ENCODE measurements at regions of chr6 and their contacts with region 1.

Region 1: DNA sequence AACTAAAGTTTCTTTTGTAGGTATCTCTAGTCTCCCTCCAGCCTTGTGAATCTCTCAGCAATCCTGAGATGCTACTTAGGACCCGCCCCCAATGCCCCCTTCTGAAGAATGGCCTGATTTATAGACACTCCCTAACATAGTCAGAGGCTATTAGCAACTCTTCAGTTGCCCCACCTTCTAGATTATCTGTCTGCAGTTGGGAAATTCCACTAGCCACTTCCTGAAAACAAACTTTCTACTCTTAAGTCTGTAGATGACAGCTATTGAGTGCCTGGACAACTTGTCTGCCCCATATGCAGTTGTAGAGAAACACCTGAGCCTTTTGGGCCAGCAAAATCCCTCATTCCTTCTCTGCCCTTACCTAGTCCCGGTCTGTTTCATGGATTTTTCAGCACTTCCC is 188.2 kb upstream of the PREP start:
- DNase-seq: peak; percentile 6 to 36 (median 8)
- H3K4me3 ChIP-seq: no peak overlapping the region
- H3K4me3 Mint-ChIP-seq: peak overlapping the region in 5 of 8 donors; percentile 9 to 67 (median 52)
- H3K27ac ChIP-seq: no peak overlapping the region
- H3K27ac Mint-ChIP-seq: peak overlapping the region in 4 of 7 donors; percentile 19 to 61 (median 56)
- H3K4me1 ChIP-seq: peaks cover 29% of the 10 kb centered on the region
- H3K4me1 Mint-ChIP-seq: peaks cover 27 to 50% (median 36%) of the 10 kb centered on the region in 4 donors
- H3K27me3 ChIP-seq: no peaks in the 10 kb centered on the region
- H3K27me3 Mint-ChIP-seq: no peaks in the 10 kb centered on the region

Region 2: DNA sequence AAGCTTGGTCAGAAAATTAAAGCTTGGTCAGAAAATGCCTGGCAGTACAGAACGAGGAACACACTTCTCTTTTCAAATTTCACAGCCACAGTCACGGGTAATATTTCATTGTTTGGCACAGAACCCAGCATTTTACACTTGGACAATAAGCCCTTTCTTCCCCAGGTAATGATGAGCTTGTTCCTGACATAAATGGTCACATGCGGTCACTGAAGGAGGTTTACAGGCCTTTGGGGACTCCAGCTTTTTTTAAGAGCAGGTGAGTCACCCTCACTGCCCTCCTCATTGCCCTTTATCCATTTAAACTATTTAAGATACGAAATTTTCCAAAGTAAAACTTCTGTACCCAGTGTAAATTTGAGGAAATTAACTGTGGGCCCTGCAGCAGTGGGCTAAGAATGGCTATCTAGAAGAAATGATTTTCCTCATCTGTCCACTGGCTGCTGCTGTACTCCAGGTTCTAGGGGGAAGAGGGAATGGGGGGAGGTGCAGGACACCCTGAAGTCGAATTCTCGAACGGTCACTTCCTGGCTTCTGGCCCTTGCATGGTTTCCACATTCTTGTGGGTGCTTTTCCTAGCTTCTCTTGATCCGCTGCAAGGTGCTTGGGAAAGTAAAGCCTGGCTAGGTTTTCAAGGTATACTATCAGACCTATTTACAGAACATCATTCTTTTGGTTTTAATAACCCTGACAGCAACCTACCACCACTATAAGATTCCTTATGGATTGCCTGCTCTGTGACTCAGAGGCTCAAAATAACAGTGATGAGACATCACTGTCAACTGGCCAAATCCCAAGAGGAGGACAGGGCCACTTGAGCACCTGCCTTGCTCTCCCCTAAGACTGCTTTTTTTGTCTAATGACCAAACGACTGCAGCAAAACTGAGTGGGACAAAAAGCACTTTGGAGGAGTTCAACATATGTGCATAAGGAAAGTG is 264.0 kb before region 1 on chr6:
- CTCF ChIA-PET with region 1: no interaction called
- POLR2A ChIA-PET with region 1: no interaction called
- intact Hi-C with region 1: no loop called
- DNase-seq: no peak
- H3K4me3 ChIP-seq: no peak overlapping the region
- H3K4me3 Mint-ChIP-seq: no peak overlapping the region
- H3K27ac ChIP-seq: no peak overlapping the region
- H3K27ac Mint-ChIP-seq: no peak overlapping the region
- H3K4me1 ChIP-seq: no peaks in the 10 kb centered on the region
- H3K4me1 Mint-ChIP-seq: peaks cover 0 to 3% (median 0%) of the 10 kb centered on the region in 4 donors
- H3K27me3 ChIP-seq: no peaks in the 10 kb centered on the region
- H3K27me3 Mint-ChIP-seq: no peaks in the 10 kb centered on the region

Region 3: GRCh38 chr6:105646391-105646867 is 55.4 kb after region 1 on chr6:
- CTCF ChIA-PET with region 1: no interaction called
- POLR2A ChIA-PET with region 1: no interaction called
- intact Hi-C with region 1: loop called (anchors 5 kb)
- DNase-seq: peak; percentile 53 to 63 (median 59)
- H3K4me3 ChIP-seq: no peak overlapping the region
- H3K4me3 Mint-ChIP-seq: peak overlapping the region in 7 of 8 donors; percentile 1 to 66 (median 59)
- H3K27ac ChIP-seq: no peak overlapping the region
- H3K27ac Mint-ChIP-seq: peak overlapping the region; percentile 33 to 85 (median 69)
- H3K4me1 ChIP-seq: peaks cover 80% of the 10 kb centered on the region
- H3K4me1 Mint-ChIP-seq: peaks cover 43 to 86% (median 65%) of the 10 kb centered on the region in 4 donors
- H3K27me3 ChIP-seq: no peaks in the 10 kb centered on the region
- H3K27me3 Mint-ChIP-seq: no peaks in the 10 kb centered on the region

Region 4: DNA sequence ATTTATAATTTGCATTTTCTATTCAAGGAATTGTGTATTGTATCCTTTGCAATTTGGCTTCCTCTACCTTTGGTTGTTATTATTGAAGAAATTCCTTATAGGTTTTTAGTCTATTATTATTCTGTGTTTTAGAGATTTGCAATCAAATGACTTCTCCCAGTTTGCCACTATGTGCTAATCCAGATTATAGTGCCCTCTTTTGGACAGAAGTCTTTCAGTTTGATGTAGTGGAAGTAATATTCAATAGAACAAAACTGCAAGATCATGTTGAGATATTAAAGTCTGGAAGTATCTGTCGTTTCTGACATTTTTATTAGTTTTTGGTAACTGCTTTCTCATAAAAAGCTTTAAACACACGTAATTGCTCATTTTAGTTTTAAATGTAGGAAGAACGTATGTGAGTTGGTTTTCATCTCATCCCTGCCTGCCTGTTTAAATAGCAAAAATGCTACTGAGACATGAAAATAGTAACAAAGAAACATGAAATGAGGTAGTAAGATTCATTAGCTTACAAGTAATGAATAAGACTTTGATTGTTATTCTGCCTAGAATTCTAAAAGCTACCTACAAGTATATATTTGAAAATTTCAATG is 965.4 kb after region 1 on chr6:
- CTCF ChIA-PET with region 1: no interaction called
- POLR2A ChIA-PET with region 1: no interaction called
- intact Hi-C with region 1: no loop called
- DNase-seq: peak in 4 of 5 donors; percentile 43 to 46 (median 45)
- H3K4me3 ChIP-seq: no peak overlapping the region
- H3K4me3 Mint-ChIP-seq: no peak overlapping the region
- H3K27ac ChIP-seq: no peak overlapping the region
- H3K27ac Mint-ChIP-seq: peak overlapping the region in 3 of 7 donors; percentile 2 to 75 (median 68)
- H3K4me1 ChIP-seq: no peaks in the 10 kb centered on the region
- H3K4me1 Mint-ChIP-seq: peaks cover 4 to 9% (median 7%) of the 10 kb centered on the region in 4 donors
- H3K27me3 ChIP-seq: no peaks in the 10 kb centered on the region
- H3K27me3 Mint-ChIP-seq: no peaks in the 10 kb centered on the region